MCF 10A (cell line): ENCODE measurements at regions of chr6 and their contacts with region 1.

Region 1: DNA sequence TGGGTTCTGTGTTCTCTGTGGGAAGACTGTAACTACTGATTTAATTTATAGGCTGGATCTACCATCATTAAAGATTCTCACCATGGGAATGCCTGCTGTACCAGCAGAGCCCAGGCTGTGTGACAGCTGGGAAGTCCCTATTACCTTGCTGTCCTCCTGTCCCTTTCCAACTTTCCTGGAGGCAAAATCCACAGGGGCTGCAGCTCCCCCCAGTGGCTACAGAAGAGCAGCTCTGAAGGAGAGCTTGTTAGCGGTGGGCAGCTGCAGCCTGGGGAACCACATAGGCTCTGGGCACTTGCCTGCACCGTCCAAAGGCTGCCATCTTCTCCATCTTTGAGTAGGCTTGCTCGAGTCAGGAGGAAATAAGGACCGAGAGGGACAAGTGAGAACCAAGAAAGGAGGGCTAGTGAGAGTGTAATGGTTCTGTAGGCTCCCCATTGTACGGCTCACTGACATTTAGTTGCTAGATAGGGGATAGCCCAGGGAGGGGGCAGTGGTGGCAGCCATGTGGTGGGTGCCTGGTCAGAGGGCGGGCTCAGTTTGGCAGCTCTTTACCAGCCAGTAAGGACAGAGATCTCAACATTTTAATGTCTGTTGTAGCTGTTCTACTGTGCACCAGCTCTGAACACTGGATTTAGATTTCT is 155.1 kb upstream of the MLIP start:
- DNase-seq: peak; percentile 70
- H3K4me3 Mint-ChIP-seq: no peak overlapping the region
- H3K27ac Mint-ChIP-seq: no peak overlapping the region
- H3K4me1 Mint-ChIP-seq: no peaks in the 10 kb centered on the region
- H3K27me3 Mint-ChIP-seq: no peaks in the 10 kb centered on the region
- CTCF ChIP-seq: peak; percentile 67

Region 2: DNA sequence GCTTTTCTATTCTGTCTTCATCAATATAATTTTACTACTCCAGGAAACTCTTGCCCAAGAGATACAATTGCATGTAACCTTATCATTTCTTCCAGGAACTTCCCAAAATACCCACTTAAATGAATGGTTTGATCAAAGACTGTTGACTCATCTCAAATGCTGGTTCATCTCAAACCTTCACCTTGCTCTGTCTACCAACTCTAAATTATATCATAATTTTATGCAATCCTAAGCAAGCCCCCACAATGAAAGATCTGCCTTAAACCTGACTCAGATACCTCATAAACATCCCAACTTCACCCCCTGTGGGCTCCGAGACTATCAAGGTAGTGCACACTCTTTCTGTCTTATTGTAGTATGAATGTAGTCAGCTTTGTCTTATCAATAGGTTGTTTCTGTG is 742.0 kb before region 1 on chr6:
- CTCF ChIA-PET with region 1: no interaction called
- POLR2A ChIA-PET with region 1: no interaction called
- intact Hi-C with region 1: no loop called
- DNase-seq: no peak
- H3K4me3 Mint-ChIP-seq: no peak overlapping the region
- H3K27ac Mint-ChIP-seq: no peak overlapping the region
- H3K4me1 Mint-ChIP-seq: no peaks in the 10 kb centered on the region
- H3K27me3 Mint-ChIP-seq: no peaks in the 10 kb centered on the region
- CTCF ChIP-seq: no peak

Region 3: DNA sequence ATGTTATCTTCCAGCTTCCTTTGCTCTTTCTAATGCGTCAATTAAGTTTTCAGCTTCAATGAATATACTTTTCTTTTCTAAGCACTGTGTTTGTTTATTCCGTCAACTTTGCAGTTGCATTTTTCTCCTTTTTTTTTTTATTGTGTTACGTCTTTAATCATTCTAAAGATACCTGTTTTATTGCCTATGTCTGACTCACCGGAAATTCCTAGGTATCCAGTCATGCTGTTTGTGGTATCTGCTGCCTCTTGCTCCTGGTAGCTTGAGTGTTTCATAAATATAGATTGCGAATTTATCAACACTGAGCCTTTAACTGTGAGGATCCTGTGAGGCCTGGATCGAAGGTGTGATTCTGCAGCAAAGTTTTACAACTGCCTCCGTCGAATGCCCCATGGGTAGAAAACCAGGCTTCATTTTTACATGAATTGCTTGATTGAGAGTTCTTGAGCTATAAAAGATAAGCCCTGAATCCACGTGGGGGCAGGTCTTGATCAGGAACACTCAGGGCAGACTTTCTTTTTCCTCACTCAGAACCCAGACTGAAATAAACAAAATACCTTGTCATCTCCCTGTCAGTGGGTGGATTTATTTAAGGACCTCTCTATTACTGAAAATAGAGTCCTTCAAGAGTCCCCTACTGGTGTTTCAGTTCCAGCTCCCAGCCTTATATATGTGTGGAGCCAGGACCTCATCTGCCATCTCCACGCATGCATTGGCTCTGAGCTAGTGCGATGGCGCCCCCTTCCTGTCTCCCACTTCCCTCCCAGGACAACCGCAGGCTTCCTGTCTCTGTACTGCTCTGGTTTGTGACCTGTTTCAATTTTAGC is 221.5 kb before region 1 on chr6:
- CTCF ChIA-PET with region 1: interaction called, 67 read pairs
- POLR2A ChIA-PET with region 1: interaction called, 5 read pairs
- intact Hi-C with region 1: loop called (anchors 5 kb)
- DNase-seq: peak; percentile 92
- H3K4me3 Mint-ChIP-seq: peak overlapping the region; percentile 44
- H3K27ac Mint-ChIP-seq: peak overlapping the region; percentile 83
- H3K4me1 Mint-ChIP-seq: peaks cover 36% of the 10 kb centered on the region
- H3K27me3 Mint-ChIP-seq: no peaks in the 10 kb centered on the region
- CTCF ChIP-seq: peak; percentile 35

Region 4: DNA sequence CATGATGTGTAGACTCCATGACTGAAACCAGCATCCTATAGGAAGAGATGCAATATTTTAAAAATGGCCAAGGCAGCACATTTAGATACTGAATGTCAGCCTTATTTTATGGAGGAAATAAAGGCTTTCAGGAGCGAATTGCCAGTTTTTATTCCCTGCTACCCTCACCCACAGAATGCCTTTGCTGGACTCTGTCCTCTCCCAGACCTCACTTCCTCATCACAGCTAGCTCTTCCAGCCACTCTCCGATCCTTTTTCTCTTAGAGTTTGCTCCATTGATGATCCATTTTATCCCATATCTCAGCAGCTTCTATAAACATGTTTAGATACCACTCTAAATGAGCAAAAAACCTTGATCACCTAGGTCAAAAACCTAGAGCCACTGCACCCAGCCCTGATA is 23.7 kb before region 1 on chr6:
- CTCF ChIA-PET with region 1: no interaction called
- POLR2A ChIA-PET with region 1: no interaction called
- intact Hi-C with region 1: no loop called
- DNase-seq: no peak
- H3K4me3 Mint-ChIP-seq: no peak overlapping the region
- H3K27ac Mint-ChIP-seq: no peak overlapping the region
- H3K4me1 Mint-ChIP-seq: peaks cover 8% of the 10 kb centered on the region
- H3K27me3 Mint-ChIP-seq: no peaks in the 10 kb centered on the region
- CTCF ChIP-seq: no peak

Region 5: GRCh38 chr6:53945584-53946558 is 10.3 kb before region 1 on chr6:
- CTCF ChIA-PET with region 1: interaction called, 12 read pairs
- POLR2A ChIA-PET with region 1: no interaction called
- intact Hi-C with region 1: no loop called
- DNase-seq: no peak
- H3K4me3 Mint-ChIP-seq: no peak overlapping the region
- H3K27ac Mint-ChIP-seq: no peak overlapping the region
- H3K4me1 Mint-ChIP-seq: no peaks in the 10 kb centered on the region
- H3K27me3 Mint-ChIP-seq: no peaks in the 10 kb centered on the region
- CTCF ChIP-seq: no peak

Region 6: GRCh38 chr6:53967415-53967814 is 11.2 kb after region 1 on chr6:
- CTCF ChIA-PET with region 1: interaction called, 11 read pairs
- POLR2A ChIA-PET with region 1: interaction called, 3 read pairs
- intact Hi-C with region 1: no loop called
- DNase-seq: no peak
- H3K4me3 Mint-ChIP-seq: no peak overlapping the region
- H3K27ac Mint-ChIP-seq: no peak overlapping the region
- H3K4me1 Mint-ChIP-seq: no peaks in the 10 kb centered on the region
- H3K27me3 Mint-ChIP-seq: no peaks in the 10 kb centered on the region
- CTCF ChIP-seq: no peak